Activated T-helper 2 cell treated with anti-CD3 and anti-CD28 coated beads, Interferon-gamma antibody, Interleukin-2, Interleukin-4, amounts not matched to agents 10 μg/mL and 5 μg/mL and 100 μg/mL, durations not matched to agents 14 hours and 24 hours and 36 hours (primary cell): ENCODE measurements at regions of chr10 and their contacts with region 1.

Region 1: GRCh38 chr10:34121781-34122628 is 693.1 kb downstream of the PARD3 start:
- DNase-seq: no peak
- H3K4me3 Mint-ChIP-seq: no peak overlapping the region
- H3K27ac Mint-ChIP-seq: peak overlapping the region; percentile 40
- H3K4me1 Mint-ChIP-seq: peaks cover 24% of the 10 kb centered on the region
- H3K27me3 Mint-ChIP-seq: no peaks in the 10 kb centered on the region

Region 2: GRCh38 chr10:34145715-34146114 is 23.7 kb after region 1 on chr10:
- intact Hi-C with region 1: loop called (anchors 2 kb)
- DNase-seq: no peak
- H3K4me3 Mint-ChIP-seq: no peak overlapping the region
- H3K27ac Mint-ChIP-seq: no peak overlapping the region
- H3K4me1 Mint-ChIP-seq: no peaks in the 10 kb centered on the region
- H3K27me3 Mint-ChIP-seq: peaks cover 2% of the 10 kb centered on the region